ENCODE measurements at regions of chr1 and their contacts with region 1.

Region 1: GRCh38 chr1:221435504-221435904 is 306.4 kb downstream of the DUSP10 start:
- DNase-seq: no peak
- ATAC-seq: no peak

Region 2: GRCh38 chr1:220810179-220810653 is 625.3 kb before region 1 on chr1:
- intact Hi-C with region 1: loop called in 1 of 2 experiments (anchors 10 kb)
- DNase-seq: peak; percentile 76 to 83
- ATAC-seq: peak; percentile 75

Region 3: DNA sequence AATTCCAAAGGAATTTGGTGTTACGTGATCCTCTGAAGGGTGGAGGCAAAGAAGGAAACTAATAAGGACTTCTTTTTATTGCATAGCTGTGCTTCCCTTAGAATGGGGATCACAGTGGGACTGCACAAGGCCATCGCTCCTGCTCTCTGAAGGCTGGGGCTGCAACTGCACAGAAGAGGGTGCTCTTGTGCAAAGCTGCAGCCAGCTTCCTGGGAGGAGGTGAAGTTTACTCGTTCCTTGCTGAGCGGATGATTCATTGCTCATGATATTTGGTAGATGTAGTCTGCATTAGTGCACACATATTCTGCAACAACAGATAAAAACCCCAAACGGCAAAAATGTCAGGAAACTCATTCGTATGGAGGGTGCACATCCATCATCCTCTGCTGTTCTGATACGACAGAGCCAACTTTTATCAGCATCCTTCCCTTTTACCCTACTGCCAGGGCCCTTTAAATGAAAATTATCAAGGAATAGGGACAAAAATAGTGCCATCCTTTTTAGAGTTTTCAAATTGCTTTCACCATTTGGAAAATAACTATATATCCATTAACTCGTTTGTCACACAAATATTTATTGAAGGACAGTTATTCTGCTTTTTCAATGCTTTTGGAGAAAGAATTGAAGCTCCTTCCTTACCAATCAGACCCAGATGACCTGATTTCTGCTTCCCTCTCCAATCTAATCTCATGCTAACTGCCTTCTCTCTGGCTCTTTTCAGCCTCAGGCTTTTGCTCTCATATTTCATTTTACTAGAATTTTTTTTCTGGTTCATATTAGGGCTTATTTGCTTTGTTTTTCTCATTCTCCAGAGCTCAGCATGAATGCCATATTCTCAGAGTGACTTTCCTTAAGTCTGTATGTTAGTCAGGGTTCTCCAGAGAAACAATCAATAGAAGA is 42.8 kb after region 1 on chr1:
- intact Hi-C with region 1: no loop called
- DNase-seq: peak in 1 of 2 donors; percentile 18
- ATAC-seq: no peak

Measured in left colon (tissue), 2 donors.